GM12878 (cell line): ENCODE measurements at regions of chr9 and their contacts with region 1.

Region 1: GRCh38 chr9:95280745-95281144 is 36.8 kb downstream of the FANCC start:
- DNase-seq: no peak
- ATAC-seq: no peak
- H3K4me3 ChIP-seq: no peak overlapping the region
- H3K27ac ChIP-seq: no peak overlapping the region
- H3K4me1 ChIP-seq: no peaks in the 10 kb centered on the region
- H3K27me3 ChIP-seq: no peaks in the 10 kb centered on the region
- CTCF ChIP-seq: no peak
- EP300 ChIP-seq: no peak
- POLR2A ChIP-seq: no peak
- RAD21 ChIP-seq: no peak

Region 2: DNA sequence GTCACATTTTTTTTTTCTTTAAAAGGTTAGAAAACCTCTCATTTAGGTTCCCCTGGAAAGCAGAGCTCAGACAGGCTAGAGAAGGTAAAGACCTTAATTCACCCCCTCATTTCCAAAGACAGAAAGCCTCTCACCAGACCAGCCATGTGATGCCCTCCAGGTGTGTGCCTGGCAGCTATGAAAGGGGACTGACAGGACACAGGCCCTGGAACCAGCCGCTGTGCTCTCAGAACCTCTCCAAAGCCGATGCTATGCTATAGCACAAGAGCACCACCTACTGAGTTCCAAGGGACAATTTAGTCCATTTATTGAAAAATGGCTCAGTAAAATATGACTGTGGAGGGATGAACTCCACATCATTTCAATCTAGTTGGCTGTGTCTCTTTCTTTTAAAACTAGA is 12.1 kb before region 1 on chr9:
- CTCF ChIA-PET with region 1: interaction called, 12 read pairs
- POLR2A ChIA-PET with region 1: no interaction called
- RAD21 ChIA-PET with region 1: interaction called, 3 read pairs
- SMC1A ChIA-PET with region 1: interaction called, 5 read pairs
- in situ Hi-C with region 1: no loop called
- intact Hi-C with region 1: no loop called
- DNase-seq: no peak
- ATAC-seq: peak; percentile 68
- H3K4me3 ChIP-seq: no peak overlapping the region
- H3K27ac ChIP-seq: no peak overlapping the region
- H3K4me1 ChIP-seq: peaks cover 18% of the 10 kb centered on the region
- H3K27me3 ChIP-seq: no peaks in the 10 kb centered on the region
- CTCF ChIP-seq: peak; percentile 31 to 56 (median 36); a peak in 4 of 6 replicates
- EP300 ChIP-seq: no peak
- POLR2A ChIP-seq: no peak
- RAD21 ChIP-seq: peak; percentile 76